PC-9 (cell line): ENCODE measurements at regions of chr22 and their contacts with region 1.

Region 1: DNA sequence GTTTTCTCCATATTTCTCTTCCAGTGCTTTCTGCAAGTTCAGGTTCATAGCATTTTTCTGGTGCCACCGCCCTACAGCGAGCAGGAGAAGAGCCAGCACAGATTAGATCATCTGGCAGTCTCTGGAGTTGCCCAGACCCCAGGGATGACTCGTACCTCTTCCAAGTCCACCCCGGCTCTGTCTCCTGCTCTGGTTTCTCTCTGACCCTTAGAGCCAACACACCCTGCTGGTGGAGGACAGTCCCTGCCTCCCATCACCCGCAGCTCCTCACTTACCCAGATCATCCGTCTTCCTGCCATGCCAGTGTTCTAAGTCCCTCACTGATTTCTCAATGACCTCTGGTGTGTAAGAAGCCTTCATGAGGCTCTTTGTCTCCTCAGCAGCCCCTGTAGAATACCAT is 28.0 kb downstream of the TST start:
- DNase-seq: no peak
- H3K4me3 ChIP-seq: no peak overlapping the region
- H3K27ac ChIP-seq: no peak overlapping the region
- H3K4me1 ChIP-seq: no peaks in the 10 kb centered on the region
- H3K27me3 ChIP-seq: peaks cover 31% of the 10 kb centered on the region
- CTCF ChIP-seq: no peak

Region 2: DNA sequence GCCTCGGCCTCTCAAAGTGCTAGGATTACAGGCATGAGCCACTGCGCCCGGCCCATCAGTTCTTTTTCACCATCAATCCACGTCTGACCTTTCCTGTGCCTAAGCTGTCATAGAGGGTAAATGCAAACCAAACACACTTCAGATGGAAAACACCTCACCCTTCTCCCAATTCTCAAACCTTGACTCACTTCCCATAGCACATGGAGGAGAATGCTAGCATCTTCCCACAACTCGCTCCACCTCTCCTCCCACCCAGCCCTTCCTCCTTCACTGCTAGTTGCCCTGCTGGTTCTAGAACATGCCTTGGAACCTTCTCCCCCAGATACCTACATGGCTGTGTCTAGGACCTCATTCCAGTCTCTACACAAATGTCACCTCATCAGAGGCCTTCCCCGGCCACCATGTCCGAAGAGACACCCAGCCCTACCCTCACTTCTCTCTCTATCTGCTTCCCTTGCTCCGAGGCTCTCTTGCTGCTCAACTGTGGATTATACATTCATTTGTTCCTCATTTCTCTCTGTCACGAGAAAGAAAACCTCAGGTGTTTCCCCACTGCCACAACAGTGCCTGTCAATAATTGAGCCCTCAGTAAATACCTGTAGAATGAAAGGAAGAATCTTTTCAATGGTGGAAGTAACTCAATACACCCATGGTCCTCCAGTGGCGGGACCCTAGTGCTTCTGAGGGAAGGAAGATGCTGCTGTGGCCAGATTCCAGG is 151.7 kb before region 1 on chr22:
- CTCF ChIA-PET with region 1: no interaction called
- POLR2A ChIA-PET with region 1: interaction called, 14 read pairs
- intact Hi-C with region 1: no loop called
- DNase-seq: peak; percentile 63 to 96
- H3K4me3 ChIP-seq: no peak overlapping the region
- H3K27ac ChIP-seq: peak overlapping the region; percentile 70
- H3K4me1 ChIP-seq: peaks cover 35% of the 10 kb centered on the region
- H3K27me3 ChIP-seq: no peaks in the 10 kb centered on the region
- CTCF ChIP-seq: no peak

Region 3: GRCh38 chr22:36913427-36914389 is 77.5 kb before region 1 on chr22 and contains the start of gene CSF2RB:
- CTCF ChIA-PET with region 1: no interaction called
- POLR2A ChIA-PET with region 1: no interaction called
- intact Hi-C with region 1: no loop called
- DNase-seq: no peak
- H3K4me3 ChIP-seq: no peak within 1 kb of the TSS
- H3K27ac ChIP-seq: no peak within 1 kb of the TSS
- H3K4me1 ChIP-seq: 0 out of 2 replicates have a peak, but pooled peaks cover 20% of the 10 kb centered on the region
- H3K27me3 ChIP-seq: no peaks in the 10 kb centered on the region
- CTCF ChIP-seq: no peak
- total RNA-seq, gene CSF2RB: not detected in 2 replicates

Region 4: GRCh38 chr22:37088108-37088605 is 97.0 kb after region 1 on chr22:
- CTCF ChIA-PET with region 1: no interaction called
- POLR2A ChIA-PET with region 1: no interaction called
- intact Hi-C with region 1: no loop called
- DNase-seq: peak; percentile 54 to 79
- H3K4me3 ChIP-seq: no peak overlapping the region
- H3K27ac ChIP-seq: no peak overlapping the region
- H3K4me1 ChIP-seq: 0 out of 2 replicates have a peak, but pooled peaks cover 7% of the 10 kb centered on the region
- H3K27me3 ChIP-seq: peaks cover 16% of the 10 kb centered on the region
- CTCF ChIP-seq: no peak